Activated CD8-positive, alpha-beta T cell treated with anti-CD3 and anti-CD28 coated beads, Interleukin-2, amount 10 ng/mL, durations not matched to agents 7 days and 5 days (primary cell): ENCODE measurements at regions of chr1 and their contacts with region 1.

Region 1: DNA sequence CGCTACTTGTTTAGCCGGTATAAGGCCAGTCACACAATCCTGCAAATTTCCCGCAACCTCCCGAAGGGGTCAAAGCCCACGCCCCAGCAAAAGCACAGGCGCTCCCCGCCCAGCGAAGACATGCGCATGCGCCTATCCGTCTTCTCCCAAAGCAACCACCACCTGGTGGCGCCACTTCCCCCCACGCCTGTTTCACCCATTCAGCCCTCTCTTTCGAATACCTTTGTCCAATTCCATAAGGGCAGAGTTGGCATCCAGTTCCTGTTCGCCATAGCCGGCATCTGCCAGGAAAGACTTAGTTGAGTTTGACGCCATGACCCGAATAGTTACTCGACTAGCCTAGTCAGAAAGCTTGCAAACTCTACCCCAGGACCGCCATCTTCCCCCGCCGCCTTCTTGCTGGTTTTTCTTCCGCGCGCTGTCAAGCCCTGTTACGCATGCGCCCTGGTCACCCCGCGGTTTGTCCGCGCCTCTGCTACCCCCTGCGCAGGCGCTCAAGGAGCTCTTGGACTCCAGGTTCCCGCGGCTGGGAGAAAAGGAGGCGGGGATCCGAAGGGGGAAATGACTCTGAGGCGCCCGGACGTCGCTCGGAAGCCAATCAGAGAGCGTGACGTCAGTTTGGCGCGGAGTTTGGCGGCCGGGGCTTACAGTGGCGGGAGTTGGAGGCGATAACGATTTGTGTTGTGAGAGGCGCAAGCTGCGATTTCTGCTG is at the starts of genes DTL and INTS7:
- DNase-seq: peak; percentile 100
- ATAC-seq: peak; percentile 87
- H3K4me3 Mint-ChIP-seq: peak within 1 kb of the TSS; percentile 98
- H3K27ac Mint-ChIP-seq: peak within 1 kb of the TSS; percentile 99
- H3K4me1 Mint-ChIP-seq: peaks cover 56% of the 10 kb centered on the region
- H3K27me3 Mint-ChIP-seq: no peaks in the 10 kb centered on the region
- total RNA-seq, gene DTL: 74.1 to 77.5 TPM
- total RNA-seq, gene INTS7: 31.8 to 32.1 TPM

Region 2: DNA sequence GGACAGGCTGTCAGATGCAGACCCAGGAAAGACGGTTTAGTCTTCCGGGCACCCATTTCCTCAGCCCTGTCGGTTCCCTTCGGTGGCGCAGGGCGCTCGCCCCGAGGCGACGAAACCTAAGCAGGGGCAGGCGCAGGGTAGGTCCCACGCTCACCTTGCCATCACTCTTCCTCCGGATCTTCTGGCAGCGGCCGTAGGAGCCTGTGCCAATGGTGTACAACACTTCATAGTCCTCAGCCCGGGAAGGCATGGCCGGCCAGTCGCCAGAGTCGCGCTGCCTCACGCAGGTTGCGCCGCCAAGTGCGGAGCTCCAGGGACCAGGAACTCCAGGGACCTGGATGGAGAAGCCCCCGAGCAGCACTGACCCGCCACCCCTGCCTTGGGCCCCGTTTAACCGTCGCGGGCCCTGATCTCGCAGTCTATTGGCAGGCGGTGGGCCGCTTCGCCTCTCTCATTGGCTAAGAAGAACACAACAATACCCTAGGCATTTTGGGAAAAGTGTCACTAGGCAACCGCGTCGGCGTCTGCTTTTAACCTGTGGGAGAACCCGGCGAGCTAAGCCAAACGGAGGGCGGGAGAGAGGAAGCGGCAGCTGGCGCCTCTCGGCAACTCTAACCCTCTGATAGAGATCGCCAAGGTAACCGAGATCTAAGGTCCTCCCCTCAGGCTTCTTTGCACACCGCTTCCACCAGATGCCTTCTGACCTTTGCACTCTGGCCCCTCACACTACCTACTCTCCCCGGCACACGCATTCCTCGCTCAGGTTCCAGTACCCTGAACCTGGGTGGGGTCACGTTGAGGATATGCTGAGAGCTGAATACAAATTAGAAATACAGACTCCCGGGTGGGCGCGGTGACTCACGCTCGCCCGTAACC is 359.8 kb before region 1 on chr1 and contains the start of gene NEK2:
- CTCF ChIA-PET with region 1: interaction called, 114 read pairs
- POLR2A ChIA-PET with region 1: interaction called, 15 read pairs
- DNase-seq: peak; percentile 95
- ATAC-seq: peak; percentile 95
- H3K4me3 Mint-ChIP-seq: peak within 1 kb of the TSS; percentile 97
- H3K27ac Mint-ChIP-seq: peak within 1 kb of the TSS; percentile 87
- H3K4me1 Mint-ChIP-seq: peaks cover 33% of the 10 kb centered on the region
- H3K27me3 Mint-ChIP-seq: peaks cover 3% of the 10 kb centered on the region
- total RNA-seq, gene NEK2: 52.6 to 54.1 TPM

Region 3: GRCh38 chr1:211738691-211739301 is 296.5 kb before region 1 on chr1:
- CTCF ChIA-PET with region 1: interaction called, 13 read pairs
- POLR2A ChIA-PET with region 1: no interaction called
- DNase-seq: peak; percentile 63
- ATAC-seq: peak; percentile 82
- H3K4me3 Mint-ChIP-seq: peak overlapping the region; percentile 62
- H3K27ac Mint-ChIP-seq: peak overlapping the region; percentile 88
- H3K4me1 Mint-ChIP-seq: peaks cover 42% of the 10 kb centered on the region
- H3K27me3 Mint-ChIP-seq: no peaks in the 10 kb centered on the region

Region 4: DNA sequence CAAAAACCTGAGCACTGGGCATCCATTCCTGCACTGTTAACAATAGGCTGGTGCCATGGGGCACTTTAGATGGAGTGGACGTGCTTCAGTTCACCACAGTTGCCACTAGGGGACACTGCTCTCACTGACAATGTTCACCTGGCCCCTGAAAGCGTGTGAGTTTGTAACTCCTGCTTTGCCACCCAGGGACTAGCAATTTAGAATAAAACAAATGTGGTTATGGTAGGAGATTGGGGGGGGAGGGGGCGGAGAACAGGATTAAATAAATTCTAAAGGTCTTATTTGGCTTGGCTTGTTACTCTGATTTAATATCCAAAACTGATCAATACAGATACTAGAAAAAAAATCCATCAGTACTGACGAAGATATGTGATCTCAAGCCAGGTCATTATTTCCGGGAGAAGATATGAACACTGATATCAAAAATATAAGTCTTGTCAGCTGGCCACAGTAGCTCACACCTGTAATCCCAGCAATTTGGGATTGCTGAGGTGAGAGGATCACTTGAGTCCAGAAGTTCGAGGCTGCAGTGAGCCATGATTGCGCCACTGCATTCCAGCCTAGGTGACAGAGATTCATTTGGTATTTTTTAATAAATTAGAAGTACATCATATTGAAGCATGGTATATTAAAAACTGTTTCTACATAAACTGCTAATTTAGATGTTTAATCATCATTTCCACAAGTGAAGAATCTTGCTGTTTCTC is 23.1 kb before region 1 on chr1:
- CTCF ChIA-PET with region 1: interaction called, 35 read pairs
- POLR2A ChIA-PET with region 1: interaction called, 7 read pairs
- DNase-seq: peak; percentile 77
- ATAC-seq: peak; percentile 99
- H3K4me3 Mint-ChIP-seq: no peak overlapping the region
- H3K27ac Mint-ChIP-seq: no peak overlapping the region
- H3K4me1 Mint-ChIP-seq: no peaks in the 10 kb centered on the region
- H3K27me3 Mint-ChIP-seq: no peaks in the 10 kb centered on the region

Region 5: GRCh38 chr1:212045981-212046380 is 10.7 kb after region 1 on chr1:
- CTCF ChIA-PET with region 1: interaction called, 57 read pairs
- POLR2A ChIA-PET with region 1: interaction called, 5 read pairs
- DNase-seq: no peak
- ATAC-seq: no peak
- H3K4me3 Mint-ChIP-seq: no peak overlapping the region
- H3K27ac Mint-ChIP-seq: no peak overlapping the region
- H3K4me1 Mint-ChIP-seq: peaks cover 14% of the 10 kb centered on the region
- H3K27me3 Mint-ChIP-seq: no peaks in the 10 kb centered on the region

Region 6: GRCh38 chr1:212062832-212063438 is 27.7 kb after region 1 on chr1:
- CTCF ChIA-PET with region 1: interaction called, 31 read pairs
- POLR2A ChIA-PET with region 1: no interaction called
- DNase-seq: no peak
- ATAC-seq: peak; percentile 60
- H3K4me3 Mint-ChIP-seq: no peak overlapping the region
- H3K27ac Mint-ChIP-seq: no peak overlapping the region
- H3K4me1 Mint-ChIP-seq: peaks cover 3% of the 10 kb centered on the region
- H3K27me3 Mint-ChIP-seq: no peaks in the 10 kb centered on the region

Region 7: DNA sequence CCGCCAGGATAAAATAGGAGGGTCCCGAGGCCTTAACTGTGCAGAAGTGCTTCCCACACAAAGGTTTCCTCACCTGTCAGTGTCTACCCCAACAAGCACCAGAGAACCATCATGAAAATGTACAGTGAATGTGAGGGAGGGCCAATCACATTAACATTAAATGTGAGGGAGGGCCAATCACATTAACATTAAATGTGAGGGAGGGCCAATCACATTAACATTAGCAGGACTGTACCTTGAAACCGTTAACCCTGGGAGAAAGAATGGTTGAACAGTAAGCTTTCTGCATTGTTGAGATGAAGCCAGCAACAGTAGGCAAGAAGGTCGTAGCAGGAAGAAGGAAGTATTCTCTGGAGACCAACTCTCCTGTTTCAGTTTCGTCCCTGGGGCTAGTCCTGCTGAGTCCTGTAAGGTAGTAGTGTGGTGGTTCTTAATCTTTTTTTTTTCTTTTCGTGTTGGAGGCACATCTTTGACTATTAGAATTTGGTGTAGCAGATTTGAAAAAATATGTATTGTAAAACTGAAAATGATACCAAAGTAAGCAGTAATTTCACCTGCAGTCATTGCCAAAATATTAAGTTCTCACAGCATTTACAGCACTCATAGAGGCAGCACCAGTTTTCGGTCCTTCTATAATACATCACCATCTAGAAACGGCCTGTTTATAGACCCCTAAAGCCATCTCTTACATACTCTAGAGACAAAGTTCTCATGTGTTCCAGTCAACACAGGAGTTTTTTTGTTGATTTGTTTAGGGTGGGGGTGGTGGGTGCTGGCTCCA is 151.3 kb after region 1 on chr1:
- CTCF ChIA-PET with region 1: no interaction called
- POLR2A ChIA-PET with region 1: no interaction called
- DNase-seq: peak; percentile 35
- ATAC-seq: peak; percentile 72
- H3K4me3 Mint-ChIP-seq: peak overlapping the region; percentile 56
- H3K27ac Mint-ChIP-seq: peak overlapping the region; percentile 90
- H3K4me1 Mint-ChIP-seq: peaks cover 38% of the 10 kb centered on the region
- H3K27me3 Mint-ChIP-seq: no peaks in the 10 kb centered on the region

Region 8: GRCh38 chr1:212284744-212285684 is 249.7 kb after region 1 on chr1 and contains the start of gene PPP2R5A:
- CTCF ChIA-PET with region 1: interaction called, 27 read pairs
- POLR2A ChIA-PET with region 1: interaction called, 20 read pairs
- DNase-seq: peak; percentile 99
- ATAC-seq: peak; percentile 94
- H3K4me3 Mint-ChIP-seq: peak within 1 kb of the TSS; percentile 99
- H3K27ac Mint-ChIP-seq: peak within 1 kb of the TSS; percentile 99
- H3K4me1 Mint-ChIP-seq: peaks cover 37% of the 10 kb centered on the region
- H3K27me3 Mint-ChIP-seq: no peaks in the 10 kb centered on the region
- total RNA-seq, gene PPP2R5A: 66.7 to 72.3 TPM